ENCODE measurements at regions of chr10 and their contacts with region 1.

Region 1: DNA sequence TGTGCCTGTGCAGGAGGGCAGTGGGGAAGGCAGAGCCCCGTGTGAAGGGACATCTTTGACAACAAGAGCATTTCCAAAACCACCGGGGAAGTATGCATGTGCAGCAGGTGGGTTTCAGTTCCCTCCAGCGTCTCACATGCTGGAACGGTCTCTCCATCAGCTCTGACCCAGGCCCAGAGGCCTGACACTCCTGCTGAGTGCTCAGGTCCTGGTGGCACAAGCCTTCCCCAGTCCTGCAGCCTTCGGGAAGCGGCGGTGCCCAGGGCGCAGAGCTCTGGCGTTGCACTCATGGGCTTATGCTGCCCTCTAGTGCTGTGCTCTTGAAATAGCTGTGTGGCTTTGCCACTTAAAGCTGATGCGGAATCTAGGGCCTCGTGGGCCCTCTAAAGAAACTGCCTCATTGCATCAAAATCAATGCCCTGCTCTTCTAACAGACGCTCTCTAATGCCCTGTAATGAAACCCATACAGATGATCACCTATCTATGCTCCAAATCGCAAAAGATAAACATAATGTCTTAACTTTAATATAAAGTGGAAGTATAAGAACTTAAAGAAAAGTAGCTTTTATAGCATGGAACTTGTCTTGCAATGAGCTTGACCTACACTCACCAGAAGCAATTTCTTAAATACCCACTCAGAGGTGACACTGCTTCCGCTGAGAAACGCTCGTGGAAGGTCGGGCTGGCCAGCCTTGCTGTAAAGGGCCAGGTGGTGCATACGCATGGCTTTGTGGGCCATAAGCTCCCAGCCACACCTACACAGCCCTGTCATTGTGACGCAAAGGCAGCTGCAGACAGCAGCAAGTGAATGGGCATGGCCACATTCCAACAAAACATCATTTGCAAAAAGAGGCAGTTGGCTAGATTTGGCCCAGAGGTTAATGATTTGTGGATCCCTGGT is 38.6 kb downstream of the CLRN3 start:
- DNase-seq: peak; percentile 59
- H3K4me3 Mint-ChIP-seq: no peak overlapping the region
- H3K27ac Mint-ChIP-seq: no peak overlapping the region
- H3K4me1 Mint-ChIP-seq: no peaks in the 10 kb centered on the region
- H3K27me3 Mint-ChIP-seq: peaks cover 4% of the 10 kb centered on the region

Region 2: DNA sequence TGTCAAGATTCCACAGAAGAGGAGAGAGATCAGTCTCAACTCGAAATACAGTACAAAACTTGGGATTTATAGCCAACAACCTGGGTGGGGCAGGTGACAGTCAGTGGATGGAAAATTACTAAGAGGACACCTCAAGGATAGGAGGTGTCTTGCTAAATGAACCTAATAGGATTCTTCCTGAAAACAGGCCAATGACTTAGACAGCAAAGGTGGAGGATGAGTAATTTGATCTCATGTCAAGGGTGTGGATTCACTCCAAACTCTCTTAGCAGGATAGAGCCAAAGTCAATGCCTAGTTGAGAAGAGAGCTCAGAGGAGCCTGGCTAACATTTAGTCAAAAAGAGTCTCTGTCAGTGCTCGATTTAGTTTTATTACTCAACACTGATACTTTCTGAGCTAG is 551.0 kb before region 1 on chr10:
- CTCF ChIA-PET with region 1: no interaction called
- DNase-seq: no peak
- H3K4me3 Mint-ChIP-seq: no peak overlapping the region
- H3K27ac Mint-ChIP-seq: no peak overlapping the region
- H3K4me1 Mint-ChIP-seq: no peaks in the 10 kb centered on the region
- H3K27me3 Mint-ChIP-seq: peaks cover 61% of the 10 kb centered on the region

Region 3: GRCh38 chr10:127563718-127564553 is 290.2 kb before region 1 on chr10:
- CTCF ChIA-PET with region 1: interaction called, 10 read pairs
- DNase-seq: peak; percentile 44
- H3K4me3 Mint-ChIP-seq: no peak overlapping the region
- H3K27ac Mint-ChIP-seq: no peak overlapping the region
- H3K4me1 Mint-ChIP-seq: no peaks in the 10 kb centered on the region
- H3K27me3 Mint-ChIP-seq: no peaks in the 10 kb centered on the region

Region 4: GRCh38 chr10:127715782-127716378 is 138.2 kb before region 1 on chr10:
- CTCF ChIA-PET with region 1: interaction called, 28 read pairs
- DNase-seq: no peak
- H3K4me3 Mint-ChIP-seq: no peak overlapping the region
- H3K27ac Mint-ChIP-seq: no peak overlapping the region
- H3K4me1 Mint-ChIP-seq: no peaks in the 10 kb centered on the region
- H3K27me3 Mint-ChIP-seq: no peaks in the 10 kb centered on the region

Measured in activated naive CD4-positive, alpha-beta T cell treated with anti-CD3 and anti-CD28 coated beads, Interleukin-2, amount 10 ng/mL, durations not matched to agents 7 days and 5 days (primary cell).